ENCODE measurements at regions of chr1 and their contacts with region 1.

Region 1: GRCh38 chr1:182962554-182963115 is 9.7 kb upstream of the SHCBP1L start:
- DNase-seq: peak; percentile 57
- H3K4me3 Mint-ChIP-seq: no peak overlapping the region
- H3K27ac Mint-ChIP-seq: no peak overlapping the region
- H3K4me1 Mint-ChIP-seq: no peaks in the 10 kb centered on the region
- H3K27me3 Mint-ChIP-seq: peaks cover 2% of the 10 kb centered on the region

Region 2: DNA sequence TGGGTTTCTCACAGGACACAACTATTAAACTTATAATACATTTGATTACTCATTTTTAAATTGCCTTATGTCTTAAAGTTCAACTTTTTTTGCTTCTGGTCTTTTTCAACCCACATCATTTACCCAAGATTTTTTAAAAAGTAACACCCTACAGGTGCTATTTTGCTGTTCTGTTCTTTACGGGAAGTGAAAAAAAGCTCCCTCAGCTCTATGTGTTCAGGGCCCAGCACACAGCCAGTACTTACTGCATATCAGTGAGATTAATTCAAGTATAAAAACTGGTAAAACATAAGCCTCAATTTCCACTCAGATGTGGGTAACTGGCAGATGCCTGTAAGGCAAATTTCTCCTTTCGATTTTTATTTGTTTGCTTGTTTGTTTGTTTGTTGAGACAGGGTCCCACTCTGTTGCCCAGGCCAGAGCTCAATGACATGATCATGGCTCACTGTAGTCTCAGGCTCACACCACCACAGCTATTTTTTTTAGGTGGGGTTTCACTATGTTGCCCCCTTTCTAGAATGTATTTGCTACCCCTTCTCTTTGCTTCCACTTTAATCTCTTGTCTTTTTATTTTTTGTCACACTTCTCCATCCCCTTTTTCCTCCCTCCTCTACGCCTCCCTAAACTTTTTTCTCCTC is 393.9 kb before region 1 on chr1:
- CTCF ChIA-PET with region 1: no interaction called
- POLR2A ChIA-PET with region 1: no interaction called
- intact Hi-C with region 1: no loop called
- DNase-seq: no peak
- H3K4me3 Mint-ChIP-seq: no peak overlapping the region
- H3K27ac Mint-ChIP-seq: no peak overlapping the region
- H3K4me1 Mint-ChIP-seq: peaks cover 4% of the 10 kb centered on the region
- H3K27me3 Mint-ChIP-seq: no peaks in the 10 kb centered on the region

Region 3: DNA sequence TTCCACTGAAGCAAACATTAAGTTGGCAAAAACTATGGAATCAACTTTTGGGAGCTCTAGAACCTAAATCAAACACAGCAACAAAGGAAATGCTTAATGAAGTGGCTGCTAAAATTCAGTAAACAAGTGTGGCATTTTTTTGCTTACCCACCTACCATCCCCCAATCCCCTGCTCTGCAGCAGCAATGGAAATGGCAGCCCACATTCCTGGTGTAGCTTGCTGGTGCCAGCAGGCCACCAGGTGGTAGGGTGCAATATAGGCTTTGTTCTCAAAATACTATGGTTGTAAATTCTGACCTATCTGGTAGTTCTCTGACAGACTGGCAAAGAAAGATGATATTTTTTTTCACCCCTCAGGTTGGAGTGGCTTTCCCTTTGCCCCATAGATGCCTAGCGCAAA is 52.5 kb before region 1 on chr1:
- CTCF ChIA-PET with region 1: no interaction called
- POLR2A ChIA-PET with region 1: no interaction called
- intact Hi-C with region 1: no loop called
- DNase-seq: no peak
- H3K4me3 Mint-ChIP-seq: no peak overlapping the region
- H3K27ac Mint-ChIP-seq: no peak overlapping the region
- H3K4me1 Mint-ChIP-seq: no peaks in the 10 kb centered on the region
- H3K27me3 Mint-ChIP-seq: peaks cover 2% of the 10 kb centered on the region

Region 4: DNA sequence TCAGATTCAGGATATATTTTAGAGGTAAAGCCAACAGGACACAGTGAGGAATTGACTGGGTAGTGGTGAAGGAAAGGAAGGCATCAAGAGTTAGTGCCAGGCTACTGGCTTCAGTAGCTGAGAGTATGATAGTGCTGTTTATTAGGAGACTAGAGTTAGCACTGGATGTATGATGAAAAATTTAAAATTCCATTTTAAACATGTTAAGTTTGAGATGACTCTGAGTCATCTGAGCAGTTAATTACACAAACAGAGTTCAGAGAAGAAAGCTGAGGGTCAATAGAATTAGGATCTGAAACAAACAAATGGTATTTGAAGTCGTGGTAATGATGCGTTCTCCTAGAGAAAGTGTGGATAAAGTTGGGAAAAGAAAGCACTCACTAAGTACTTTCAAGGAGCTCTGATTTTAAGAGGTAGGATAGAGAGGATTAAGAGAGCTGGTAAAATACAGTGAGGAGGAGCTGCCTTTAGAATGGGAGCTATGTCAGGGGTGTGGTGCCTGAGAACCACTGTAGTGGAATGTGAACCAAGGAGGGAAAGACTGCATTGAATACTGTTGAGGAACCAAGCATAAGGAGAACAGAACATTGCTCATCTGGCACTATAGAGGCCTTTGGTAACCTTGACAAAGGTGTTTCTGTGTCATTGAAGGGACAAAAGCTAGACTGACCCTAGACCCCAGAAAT is 12.0 kb after region 1 on chr1:
- CTCF ChIA-PET with region 1: no interaction called
- POLR2A ChIA-PET with region 1: no interaction called
- intact Hi-C with region 1: no loop called
- DNase-seq: no peak
- H3K4me3 Mint-ChIP-seq: no peak overlapping the region
- H3K27ac Mint-ChIP-seq: no peak overlapping the region
- H3K4me1 Mint-ChIP-seq: no peaks in the 10 kb centered on the region
- H3K27me3 Mint-ChIP-seq: peaks cover 9% of the 10 kb centered on the region

Region 5: DNA sequence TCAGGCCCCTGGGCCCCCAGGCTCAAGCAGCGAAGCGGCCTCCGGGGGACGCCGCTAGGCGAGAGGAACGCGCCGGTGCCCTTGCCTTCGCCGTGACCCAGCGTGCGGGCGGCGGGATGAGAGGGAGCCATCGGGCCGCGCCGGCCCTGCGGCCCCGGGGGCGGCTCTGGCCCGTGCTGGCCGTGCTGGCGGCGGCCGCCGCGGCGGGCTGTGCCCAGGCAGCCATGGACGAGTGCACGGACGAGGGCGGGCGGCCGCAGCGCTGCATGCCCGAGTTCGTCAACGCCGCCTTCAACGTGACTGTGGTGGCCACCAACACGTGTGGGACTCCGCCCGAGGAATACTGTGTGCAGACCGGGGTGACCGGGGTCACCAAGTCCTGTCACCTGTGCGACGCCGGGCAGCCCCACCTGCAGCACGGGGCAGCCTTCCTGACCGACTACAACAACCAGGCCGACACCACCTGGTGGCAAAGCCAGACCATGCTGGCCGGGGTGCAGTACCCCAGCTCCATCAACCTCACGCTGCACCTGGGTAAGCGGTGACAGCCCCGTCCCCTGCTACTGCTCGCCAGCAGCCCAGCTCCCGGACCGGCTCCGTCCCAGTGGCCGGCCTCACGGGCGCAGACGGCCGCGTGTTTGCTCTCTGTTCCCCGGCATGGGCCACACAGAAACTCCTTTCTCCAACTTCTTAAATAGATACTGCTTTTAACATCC is 61.1 kb after region 1 on chr1:
- CTCF ChIA-PET with region 1: no interaction called
- POLR2A ChIA-PET with region 1: no interaction called
- intact Hi-C with region 1: loop called (anchors 1 kb)
- DNase-seq: peak; percentile 52
- H3K4me3 Mint-ChIP-seq: peak overlapping the region; percentile 56
- H3K27ac Mint-ChIP-seq: no peak overlapping the region
- H3K4me1 Mint-ChIP-seq: peaks cover 16% of the 10 kb centered on the region
- H3K27me3 Mint-ChIP-seq: peaks cover 60% of the 10 kb centered on the region

Region 6: GRCh38 chr1:183227963-183228649 is 265.5 kb after region 1 on chr1:
- CTCF ChIA-PET with region 1: interaction called, 14 read pairs
- POLR2A ChIA-PET with region 1: no interaction called
- intact Hi-C with region 1: loop called (anchors 5 kb)
- DNase-seq: peak; percentile 56
- H3K4me3 Mint-ChIP-seq: no peak overlapping the region
- H3K27ac Mint-ChIP-seq: no peak overlapping the region
- H3K4me1 Mint-ChIP-seq: peaks cover 6% of the 10 kb centered on the region
- H3K27me3 Mint-ChIP-seq: no peaks in the 10 kb centered on the region

Measured in activated CD4-positive, alpha-beta memory T cell treated with anti-CD3 and anti-CD28 coated beads for 36 hours (primary cell).